WTC11 (cell line): ENCODE measurements at regions of chr1 and their contacts with region 1.

Region 1: DNA sequence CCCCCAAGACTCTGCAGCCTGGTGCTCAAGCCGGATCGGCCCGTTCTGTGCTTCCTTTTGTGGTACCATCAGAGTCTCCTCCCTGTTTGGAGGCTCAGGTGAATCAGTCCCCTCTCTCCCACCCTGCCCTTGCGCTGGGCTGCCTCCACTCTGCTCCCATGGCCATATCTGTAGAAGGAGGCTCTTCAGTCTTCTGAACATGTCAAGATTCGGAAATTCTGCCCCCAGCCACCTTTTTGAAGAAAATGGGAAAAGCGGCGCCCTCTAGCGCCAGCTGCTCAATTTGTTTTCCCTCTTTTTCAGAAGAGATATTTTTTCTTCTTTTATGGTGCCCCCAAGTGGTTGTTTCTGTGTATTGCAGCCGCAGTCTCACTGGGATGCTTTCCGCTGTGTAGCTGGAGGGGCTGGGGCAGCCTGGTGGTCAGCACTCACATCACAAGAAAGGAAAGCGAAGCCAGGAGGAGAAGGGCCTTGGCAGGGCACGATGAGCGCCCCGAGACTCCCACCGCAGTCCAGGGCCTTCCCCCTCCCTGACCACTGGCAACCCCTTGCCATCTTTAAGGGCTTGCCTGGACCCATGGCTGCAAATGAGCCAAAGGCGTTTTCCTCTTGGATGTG is 58.4 kb upstream of the CACNA1E start:
- DNase-seq: peak; percentile 91
- ATAC-seq: peak; percentile 95
- H3K4me3 Mint-ChIP-seq: peak overlapping the region; percentile 31; the same call in 1 of the 2 replicates
- H3K27ac Mint-ChIP-seq: no peak overlapping the region
- H3K4me1 Mint-ChIP-seq: peaks cover 19% of the 10 kb centered on the region
- H3K27me3 Mint-ChIP-seq: peaks cover 21% of the 10 kb centered on the region
- CTCF ChIP-seq: peak; percentile 99

Region 2: GRCh38 chr1:181179987-181180365 is 244.9 kb before region 1 on chr1:
- CTCF ChIA-PET with region 1: interaction called, 34 read pairs
- POLR2A ChIA-PET with region 1: no interaction called
- DNase-seq: peak; percentile 61
- ATAC-seq: peak; percentile 64
- H3K4me3 Mint-ChIP-seq: peak overlapping the region; percentile 33
- H3K27ac Mint-ChIP-seq: peak overlapping the region; percentile 71
- H3K4me1 Mint-ChIP-seq: peaks cover 34% of the 10 kb centered on the region
- H3K27me3 Mint-ChIP-seq: peaks cover 12% of the 10 kb centered on the region
- CTCF ChIP-seq: no peak

Region 3: DNA sequence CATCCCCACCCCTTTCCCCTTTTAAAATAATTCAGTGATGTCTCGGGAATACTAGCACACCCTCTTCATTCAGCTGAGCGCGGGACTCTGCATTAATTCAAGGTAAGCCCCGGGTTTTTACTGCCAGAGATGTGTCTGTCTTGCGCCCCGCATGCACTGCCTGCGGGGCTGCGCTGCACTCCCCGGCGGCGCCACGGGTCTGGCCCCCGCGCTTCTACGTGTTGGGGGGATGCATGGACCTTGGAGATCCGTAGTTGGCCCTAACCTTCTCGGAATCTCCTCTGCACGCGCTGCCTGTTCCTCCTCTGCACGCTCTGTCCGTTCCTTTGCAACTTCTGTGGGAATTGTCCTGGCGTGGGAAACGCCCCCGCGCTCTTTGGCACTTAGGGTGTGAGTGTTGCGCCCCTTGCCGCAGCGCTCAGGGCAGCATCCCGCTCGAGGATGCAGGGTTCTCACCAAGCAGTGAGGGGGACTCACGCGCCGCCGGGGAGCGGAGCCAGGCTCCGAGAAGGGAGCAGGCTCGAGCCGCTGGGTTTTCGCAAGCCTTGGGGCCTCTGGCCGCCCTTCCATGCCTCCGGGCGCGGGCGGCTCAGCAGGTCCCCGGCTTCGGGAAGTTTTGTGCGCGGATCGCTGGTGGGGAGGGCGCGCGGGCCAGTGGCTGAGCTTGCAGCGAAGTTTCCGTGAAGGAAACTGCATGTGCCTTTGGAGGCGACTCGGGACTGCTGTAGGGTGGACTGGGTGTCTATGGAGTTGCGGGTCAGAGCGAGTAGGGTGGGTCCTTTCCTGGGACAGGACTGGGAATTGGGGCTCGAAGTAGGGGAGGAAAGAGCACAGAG is 106.7 kb before region 1 on chr1:
- CTCF ChIA-PET with region 1: interaction called, 10 read pairs
- POLR2A ChIA-PET with region 1: no interaction called
- DNase-seq: peak; percentile 62
- ATAC-seq: peak; percentile 80
- H3K4me3 Mint-ChIP-seq: peak overlapping the region; percentile 86
- H3K27ac Mint-ChIP-seq: no peak overlapping the region
- H3K4me1 Mint-ChIP-seq: peaks cover 16% of the 10 kb centered on the region
- H3K27me3 Mint-ChIP-seq: peaks cover 76% of the 10 kb centered on the region
- CTCF ChIP-seq: no peak

Region 4: DNA sequence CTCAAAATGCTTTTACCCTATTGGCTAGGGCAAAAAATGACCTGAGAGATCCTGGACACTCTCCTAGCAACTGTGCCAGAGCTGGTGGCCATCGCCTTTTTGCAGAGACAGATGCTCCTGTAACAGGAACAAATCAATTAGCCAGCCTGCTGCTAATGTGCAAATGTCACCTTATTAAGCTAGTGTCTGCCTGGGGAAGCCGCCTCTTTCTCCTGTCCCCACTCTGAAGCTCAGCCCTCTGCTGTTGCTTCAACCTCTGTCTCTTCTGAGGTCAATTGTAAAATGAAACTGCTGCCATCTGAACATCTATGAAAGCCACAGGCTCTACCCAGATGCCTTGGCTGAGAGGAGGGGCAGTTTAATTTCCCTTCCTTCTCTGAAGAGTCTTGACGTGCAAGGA is 27.1 kb before region 1 on chr1:
- CTCF ChIA-PET with region 1: interaction called, 14 read pairs
- POLR2A ChIA-PET with region 1: no interaction called
- DNase-seq: no peak
- ATAC-seq: no peak
- H3K4me3 Mint-ChIP-seq: no peak overlapping the region
- H3K27ac Mint-ChIP-seq: no peak overlapping the region
- H3K4me1 Mint-ChIP-seq: no peaks in the 10 kb centered on the region
- H3K27me3 Mint-ChIP-seq: no peaks in the 10 kb centered on the region
- CTCF ChIP-seq: no peak

Region 5: GRCh38 chr1:181413195-181413815 is 11.6 kb before region 1 on chr1:
- CTCF ChIA-PET with region 1: interaction called, 12 read pairs
- POLR2A ChIA-PET with region 1: no interaction called
- DNase-seq: no peak
- ATAC-seq: no peak
- H3K4me3 Mint-ChIP-seq: no peak overlapping the region
- H3K27ac Mint-ChIP-seq: no peak overlapping the region
- H3K4me1 Mint-ChIP-seq: no peaks in the 10 kb centered on the region
- H3K27me3 Mint-ChIP-seq: no peaks in the 10 kb centered on the region; the same call in 1 of the 2 replicates
- CTCF ChIP-seq: no peak

Region 6: DNA sequence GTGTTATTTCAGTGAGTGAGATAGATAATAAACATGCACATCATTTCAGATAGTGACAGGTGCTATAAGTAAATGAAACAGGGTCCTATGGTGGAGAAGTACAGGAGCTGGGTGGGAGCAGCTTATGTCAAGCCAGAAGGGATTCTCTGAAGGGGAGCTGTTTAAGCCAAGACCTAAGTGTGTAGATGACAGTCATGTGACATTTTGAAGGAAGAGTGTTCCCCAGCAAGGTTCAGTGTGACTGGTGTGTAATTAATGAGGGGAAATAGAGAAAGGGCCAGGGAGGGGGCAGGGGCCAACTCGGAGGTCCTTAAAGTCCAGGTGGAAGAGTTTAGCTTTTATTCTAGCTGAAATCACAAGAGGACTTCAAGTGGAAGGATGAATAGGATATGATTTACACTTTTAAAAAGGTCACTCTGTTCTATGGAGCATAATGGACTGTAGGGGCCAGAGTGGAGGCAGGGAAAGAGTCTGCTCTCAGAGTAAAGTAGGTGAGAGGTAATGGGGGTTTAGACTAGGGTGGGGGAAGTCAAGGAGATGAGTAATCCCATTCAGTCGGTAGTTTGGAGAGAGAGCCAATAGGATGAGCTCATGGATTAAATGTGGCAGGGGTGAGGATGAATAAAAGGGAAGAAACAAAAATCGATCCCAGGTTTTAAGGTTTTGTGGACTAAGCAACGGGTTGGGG is 301.6 kb after region 1 on chr1:
- CTCF ChIA-PET with region 1: no interaction called
- POLR2A ChIA-PET with region 1: no interaction called
- DNase-seq: no peak
- ATAC-seq: no peak
- H3K4me3 Mint-ChIP-seq: no peak overlapping the region
- H3K27ac Mint-ChIP-seq: no peak overlapping the region
- H3K4me1 Mint-ChIP-seq: peaks cover 6% of the 10 kb centered on the region
- H3K27me3 Mint-ChIP-seq: no peaks in the 10 kb centered on the region
- CTCF ChIP-seq: no peak